AG04450 (cell line): ENCODE measurements at regions of chr19 and their contacts with region 1.

Region 1: GRCh38 chr19:45882652-45883585 is 3.0 kb downstream of the IRF2BP1 start:
- DNase-seq: peak; percentile 60
- H3K4me3 ChIP-seq: 0 out of 2 replicates have a peak overlapping the region, but pooled peaks have one; percentile 17
- H3K27ac ChIP-seq: no peak overlapping the region
- H3K27me3 ChIP-seq: no peaks in the 10 kb centered on the region
- CTCF ChIP-seq: peak; percentile 98

Region 2: GRCh38 chr19:45862564-45863334 is 20.2 kb before region 1 on chr19 and contains the start of gene SYMPK:
- CTCF ChIA-PET with region 1: interaction called, 22 read pairs
- POLR2A ChIA-PET with region 1: interaction called, 8 read pairs
- DNase-seq: peak; percentile 93
- H3K4me3 ChIP-seq: peak within 1 kb of the TSS; percentile 96
- H3K27ac ChIP-seq: peak within 1 kb of the TSS; percentile 95
- H3K27me3 ChIP-seq: peaks cover 38% of the 10 kb centered on the region
- CTCF ChIP-seq: no peak
- polyA plus RNA-seq, gene SYMPK: 54.3 and 63.1 TPM in 2 replicates

Region 3: DNA sequence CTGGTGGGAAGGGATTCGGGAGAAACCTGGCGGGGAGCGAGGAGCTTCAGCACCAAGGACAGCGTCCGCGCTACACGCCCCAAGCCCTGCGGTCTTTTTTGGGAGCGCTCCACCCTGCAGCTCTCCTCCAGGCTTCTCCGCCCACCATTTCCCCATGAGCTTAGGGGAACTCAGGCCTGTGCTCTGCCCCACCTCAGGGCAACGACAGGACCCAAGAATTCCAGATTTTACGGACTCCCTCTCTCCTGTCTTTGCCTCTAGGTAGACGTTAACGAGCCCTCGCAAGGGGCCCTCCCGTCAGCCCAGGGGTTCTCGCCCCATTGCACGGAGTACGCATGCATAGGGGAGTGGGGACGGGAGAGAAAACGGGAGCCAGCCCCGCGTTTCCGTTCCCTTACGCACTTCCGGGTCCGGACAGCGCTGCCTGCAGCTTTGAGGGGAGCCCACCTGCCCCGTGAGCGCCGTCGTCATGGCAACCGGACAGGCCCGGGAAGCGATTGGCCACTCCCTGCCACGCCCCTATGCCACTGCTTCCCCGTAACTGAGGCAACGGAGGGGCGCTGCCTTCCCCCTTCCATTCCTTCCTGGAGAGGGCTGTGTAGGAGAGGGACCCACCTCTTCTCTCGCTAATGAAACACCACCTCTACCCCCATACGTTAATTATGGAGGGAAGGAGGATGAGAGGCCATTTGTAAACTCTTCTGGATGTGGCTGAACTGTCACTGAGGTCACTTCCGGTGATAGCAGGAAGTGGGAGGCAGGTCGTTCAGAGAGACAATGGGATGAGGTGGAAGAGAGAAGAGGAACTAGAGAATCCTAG is 70.0 kb after region 1 on chr19:
- CTCF ChIA-PET with region 1: no interaction called
- POLR2A ChIA-PET with region 1: no interaction called
- DNase-seq: peak; percentile 18
- H3K4me3 ChIP-seq: peak overlapping the region; percentile 18; the same call in 1 of the 2 replicates
- H3K27ac ChIP-seq: no peak overlapping the region
- H3K27me3 ChIP-seq: peaks cover 3% of the 10 kb centered on the region
- CTCF ChIP-seq: no peak

Region 4: DNA sequence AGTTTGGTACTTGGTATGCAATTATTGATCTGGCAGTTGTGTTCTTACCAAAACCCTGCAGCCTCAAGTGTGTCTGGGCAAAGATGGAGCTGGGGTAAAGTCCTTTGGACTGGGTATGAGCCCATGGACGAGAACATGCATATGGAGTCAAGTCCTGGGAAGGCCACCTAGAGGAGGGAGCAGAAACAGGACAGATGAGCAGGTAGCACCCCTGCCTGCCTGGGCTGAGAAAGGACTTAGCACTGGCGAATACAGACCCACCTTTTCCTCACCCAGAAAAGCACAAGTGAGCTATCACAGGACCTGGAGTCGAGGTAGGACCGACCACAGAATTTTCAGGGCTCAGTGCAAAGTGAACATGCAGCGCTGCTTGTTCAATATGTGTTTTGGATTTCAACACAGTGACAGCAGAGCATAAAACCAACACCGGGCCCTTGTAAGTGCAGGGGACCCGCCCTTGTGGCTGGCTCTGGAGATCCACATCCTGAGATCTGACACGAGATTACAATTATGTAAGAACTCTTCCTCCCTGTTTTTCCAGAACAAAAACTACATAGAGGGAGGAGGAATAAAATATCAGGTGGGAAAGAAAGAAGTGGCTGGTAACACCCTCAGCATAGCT is 291.1 kb after region 1 on chr19:
- CTCF ChIA-PET with region 1: no interaction called
- POLR2A ChIA-PET with region 1: no interaction called
- DNase-seq: no peak
- H3K4me3 ChIP-seq: no peak overlapping the region
- H3K27ac ChIP-seq: no peak overlapping the region
- H3K27me3 ChIP-seq: peaks cover 30% of the 10 kb centered on the region
- CTCF ChIP-seq: no peak